OCI-LY7 (cell line): ENCODE measurements at regions of chr16 and their contacts with region 1.

Region 1: GRCh38 chr16:1610276-1611017 is 1.4 kb downstream of the IFT140 start:
- DNase-seq: peak; percentile 94
- H3K4me3 ChIP-seq: peak overlapping the region; percentile 77
- H3K27ac ChIP-seq: peak overlapping the region; percentile 79
- H3K4me1 ChIP-seq: peaks cover 33% of the 10 kb centered on the region
- CTCF ChIP-seq: no peak

Region 2: GRCh38 chr16:970766-971581 is 639.5 kb before region 1 on chr16 and contains the start of gene LMF1:
- CTCF ChIA-PET with region 1: no interaction called
- POLR2A ChIA-PET with region 1: no interaction called
- intact Hi-C with region 1: loop called (anchors 5 kb)
- DNase-seq: peak; percentile 93
- H3K4me3 ChIP-seq: peak within 1 kb of the TSS; percentile 94
- H3K27ac ChIP-seq: peak within 1 kb of the TSS; percentile 44
- H3K4me1 ChIP-seq: peaks cover 39% of the 10 kb centered on the region
- CTCF ChIP-seq: no peak
- total RNA-seq, gene LMF1: 5.8 and 17.0 TPM in 2 replicates

Region 3: GRCh38 chr16:1428511-1428910 is 181.9 kb before region 1 on chr16:
- CTCF ChIA-PET with region 1: no interaction called
- POLR2A ChIA-PET with region 1: no interaction called
- intact Hi-C with region 1: loop called (anchors 10 kb)
- DNase-seq: peak; percentile 49
- H3K4me3 ChIP-seq: no peak overlapping the region
- H3K27ac ChIP-seq: no peak overlapping the region
- H3K4me1 ChIP-seq: peaks cover 4% of the 10 kb centered on the region
- CTCF ChIP-seq: peak; percentile 65

Region 4: GRCh38 chr16:1637526-1637925 is 27.1 kb after region 1 on chr16:
- CTCF ChIA-PET with region 1: no interaction called
- POLR2A ChIA-PET with region 1: no interaction called
- intact Hi-C with region 1: no loop called
- DNase-seq: no peak
- H3K4me3 ChIP-seq: no peak overlapping the region
- H3K27ac ChIP-seq: no peak overlapping the region
- H3K4me1 ChIP-seq: no peaks in the 10 kb centered on the region
- CTCF ChIP-seq: no peak

Region 5: GRCh38 chr16:1677802-1678496 is 67.5 kb after region 1 on chr16 and contains the start of gene JPT2:
- CTCF ChIA-PET with region 1: no interaction called
- POLR2A ChIA-PET with region 1: no interaction called
- intact Hi-C with region 1: loop called (anchors 2 kb)
- DNase-seq: peak; percentile 98
- H3K4me3 ChIP-seq: peak within 1 kb of the TSS; percentile 97
- H3K27ac ChIP-seq: peak within 1 kb of the TSS; percentile 57
- H3K4me1 ChIP-seq: peaks cover 22% of the 10 kb centered on the region
- CTCF ChIP-seq: no peak
- total RNA-seq, gene JPT2: 48.3 and 67.4 TPM in 2 replicates

Region 6: DNA sequence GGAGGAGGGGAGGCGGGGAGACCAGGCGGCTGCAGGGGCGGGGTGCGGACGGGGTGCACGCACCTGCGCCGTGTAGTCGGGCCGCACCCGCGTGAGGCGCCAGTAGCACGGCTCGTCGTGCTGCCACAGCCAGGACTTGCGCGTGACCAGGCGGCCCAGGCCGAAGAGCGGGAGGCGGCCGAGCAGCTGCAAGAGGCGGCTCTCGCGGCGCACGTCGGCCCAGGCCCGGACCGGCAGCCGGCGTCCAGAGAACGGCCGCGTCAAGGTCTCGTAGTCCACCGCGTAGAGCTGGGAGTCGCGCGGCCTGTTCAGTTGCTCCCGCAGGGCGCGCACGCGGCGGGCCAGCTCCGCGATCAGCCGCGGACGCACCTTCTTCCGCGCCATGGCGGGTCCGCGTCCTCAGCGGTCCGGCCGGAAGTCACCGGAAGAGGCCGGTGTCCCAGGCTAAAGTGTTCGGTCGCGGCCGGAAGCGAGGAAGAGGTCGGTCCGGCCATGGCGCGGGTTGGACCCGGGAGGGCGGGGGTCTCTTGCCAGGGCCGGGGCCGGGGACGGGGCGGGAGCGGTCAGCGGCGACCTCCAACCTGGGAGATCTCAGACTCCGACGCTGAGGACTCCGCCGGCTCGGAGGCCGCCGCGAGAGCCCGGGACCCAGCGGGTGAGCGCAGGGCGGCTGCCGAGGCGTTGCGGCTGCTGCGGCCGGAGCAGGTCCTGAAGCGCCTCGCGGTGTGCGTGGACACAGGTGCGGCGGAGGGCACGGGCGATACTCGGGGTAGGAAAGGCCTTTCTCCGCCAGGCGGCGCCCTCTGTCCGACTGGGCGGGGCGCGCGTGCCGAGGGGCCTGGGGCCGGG is 162.5 kb after region 1 on chr16 and contains the starts of genes EME2 and MRPS34:
- CTCF ChIA-PET with region 1: no interaction called
- POLR2A ChIA-PET with region 1: no interaction called
- intact Hi-C with region 1: loop called (anchors 5 kb)
- DNase-seq: peak; percentile 92
- H3K4me3 ChIP-seq: peak within 1 kb of the TSS; percentile 98
- H3K27ac ChIP-seq: peak within 1 kb of the TSS; percentile 89
- H3K4me1 ChIP-seq: peaks cover 23% of the 10 kb centered on the region
- CTCF ChIP-seq: peak; percentile 80
- total RNA-seq, gene EME2: 22.0 and 23.8 TPM in 2 replicates
- total RNA-seq, gene MRPS34: 170 and 190 TPM in 2 replicates